ENCODE measurements at regions of chr9 and their contacts with region 1.

Region 1: GRCh38 chr9:83622939-83623678 is at the start of gene IDNK:
- DNase-seq: peak; percentile 82
- ATAC-seq: peak; percentile 89
- H3K4me3 Mint-ChIP-seq: peak within 1 kb of the TSS; percentile 88
- H3K27ac Mint-ChIP-seq: peak within 1 kb of the TSS; percentile 95
- H3K4me1 Mint-ChIP-seq: peaks cover 21% of the 10 kb centered on the region
- H3K27me3 Mint-ChIP-seq: no peaks in the 10 kb centered on the region
- total RNA-seq, gene IDNK: 8.3 to 9.8 TPM

Region 2: DNA sequence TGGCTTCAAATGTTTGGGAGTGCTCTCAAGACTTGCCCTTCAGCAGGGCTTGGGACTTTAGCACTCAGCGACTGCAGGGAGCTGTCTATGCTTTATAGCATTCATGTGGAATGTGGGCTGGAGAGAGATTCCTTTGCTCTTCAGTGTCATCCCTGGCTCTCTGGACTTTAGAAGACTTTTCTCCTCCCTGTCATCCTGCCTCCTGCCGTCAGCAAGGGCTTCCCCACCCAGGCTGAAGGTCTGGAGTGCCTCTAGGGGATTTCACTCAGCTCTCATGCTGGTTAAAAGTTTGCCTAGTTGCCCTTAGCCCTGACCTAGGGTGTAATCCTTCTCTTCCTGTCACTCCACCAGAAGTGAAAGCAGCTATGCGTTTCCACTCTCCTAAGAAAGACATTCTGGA is 295.8 kb before region 1 on chr9:
- POLR2A ChIA-PET with region 1: no interaction called
- DNase-seq: no peak
- ATAC-seq: no peak
- H3K4me3 Mint-ChIP-seq: no peak overlapping the region
- H3K27ac Mint-ChIP-seq: no peak overlapping the region
- H3K4me1 Mint-ChIP-seq: no peaks in the 10 kb centered on the region
- H3K27me3 Mint-ChIP-seq: no peaks in the 10 kb centered on the region

Region 3: GRCh38 chr9:83572524-83572923 is 50.6 kb before region 1 on chr9:
- POLR2A ChIA-PET with region 1: no interaction called
- DNase-seq: no peak
- ATAC-seq: no peak
- H3K4me3 Mint-ChIP-seq: no peak overlapping the region
- H3K27ac Mint-ChIP-seq: no peak overlapping the region
- H3K4me1 Mint-ChIP-seq: peaks cover 8% of the 10 kb centered on the region
- H3K27me3 Mint-ChIP-seq: no peaks in the 10 kb centered on the region

Region 4: GRCh38 chr9:83588256-83588655 is 34.9 kb before region 1 on chr9:
- POLR2A ChIA-PET with region 1: no interaction called
- DNase-seq: no peak
- ATAC-seq: no peak
- H3K4me3 Mint-ChIP-seq: no peak overlapping the region
- H3K27ac Mint-ChIP-seq: no peak overlapping the region
- H3K4me1 Mint-ChIP-seq: no peaks in the 10 kb centered on the region
- H3K27me3 Mint-ChIP-seq: no peaks in the 10 kb centered on the region

Region 5: DNA sequence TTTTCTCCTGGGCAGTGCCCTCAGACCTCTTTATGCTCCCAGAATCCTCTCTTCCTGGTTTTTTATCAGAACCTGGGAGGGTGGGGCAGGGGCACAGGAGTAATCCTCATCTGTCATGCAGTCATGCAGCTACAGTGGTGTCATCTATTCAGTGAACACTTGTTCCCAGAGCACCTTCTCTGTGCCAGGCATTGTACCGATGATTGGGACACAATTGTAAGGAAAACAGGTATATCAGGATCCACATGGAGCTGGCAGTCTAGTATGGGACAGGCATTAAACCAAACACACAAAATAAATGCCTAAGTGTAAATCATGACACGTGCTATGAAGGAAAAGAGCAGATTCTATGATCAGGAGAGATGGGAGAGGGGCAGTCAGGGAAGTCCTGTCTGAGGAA is 21.6 kb before region 1 on chr9:
- POLR2A ChIA-PET with region 1: no interaction called
- DNase-seq: no peak
- ATAC-seq: no peak
- H3K4me3 Mint-ChIP-seq: no peak overlapping the region
- H3K27ac Mint-ChIP-seq: no peak overlapping the region
- H3K4me1 Mint-ChIP-seq: no peaks in the 10 kb centered on the region
- H3K27me3 Mint-ChIP-seq: no peaks in the 10 kb centered on the region

Region 6: DNA sequence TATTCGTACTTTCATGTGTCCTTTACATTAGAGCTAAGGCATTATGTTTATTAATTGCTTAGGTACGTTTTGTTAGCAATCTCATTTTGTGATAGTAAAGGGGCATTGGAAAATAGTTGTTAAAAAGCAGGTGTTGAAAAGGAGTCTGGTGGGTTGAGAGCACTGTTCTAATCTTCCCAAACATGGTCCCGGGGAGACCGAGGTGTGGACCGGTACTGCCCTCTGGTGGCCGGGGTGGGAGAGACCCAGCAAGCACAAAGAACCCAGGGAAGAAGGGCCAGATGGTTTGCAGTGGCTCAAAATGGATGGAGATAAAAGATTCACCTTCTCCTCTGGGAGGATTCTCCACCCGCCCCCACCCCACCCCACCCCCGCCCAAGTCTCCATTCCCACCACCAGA is 26.0 kb after region 1 on chr9:
- POLR2A ChIA-PET with region 1: interaction called, 10 read pairs
- DNase-seq: peak; percentile 81
- ATAC-seq: peak; percentile 84
- H3K4me3 Mint-ChIP-seq: no peak overlapping the region
- H3K27ac Mint-ChIP-seq: no peak overlapping the region
- H3K4me1 Mint-ChIP-seq: peaks cover 7% of the 10 kb centered on the region
- H3K27me3 Mint-ChIP-seq: no peaks in the 10 kb centered on the region

Region 7: GRCh38 chr9:83707768-83708514 is 84.8 kb after region 1 on chr9 and contains the start of gene UBQLN1:
- POLR2A ChIA-PET with region 1: interaction called, 45 read pairs
- DNase-seq: peak; percentile 94
- ATAC-seq: peak; percentile 86
- H3K4me3 Mint-ChIP-seq: peak within 1 kb of the TSS; percentile 90
- H3K27ac Mint-ChIP-seq: peak within 1 kb of the TSS; percentile 100
- H3K4me1 Mint-ChIP-seq: peaks cover 30% of the 10 kb centered on the region
- H3K27me3 Mint-ChIP-seq: no peaks in the 10 kb centered on the region
- total RNA-seq, gene UBQLN1: 87.9 to 108 TPM

Region 8: DNA sequence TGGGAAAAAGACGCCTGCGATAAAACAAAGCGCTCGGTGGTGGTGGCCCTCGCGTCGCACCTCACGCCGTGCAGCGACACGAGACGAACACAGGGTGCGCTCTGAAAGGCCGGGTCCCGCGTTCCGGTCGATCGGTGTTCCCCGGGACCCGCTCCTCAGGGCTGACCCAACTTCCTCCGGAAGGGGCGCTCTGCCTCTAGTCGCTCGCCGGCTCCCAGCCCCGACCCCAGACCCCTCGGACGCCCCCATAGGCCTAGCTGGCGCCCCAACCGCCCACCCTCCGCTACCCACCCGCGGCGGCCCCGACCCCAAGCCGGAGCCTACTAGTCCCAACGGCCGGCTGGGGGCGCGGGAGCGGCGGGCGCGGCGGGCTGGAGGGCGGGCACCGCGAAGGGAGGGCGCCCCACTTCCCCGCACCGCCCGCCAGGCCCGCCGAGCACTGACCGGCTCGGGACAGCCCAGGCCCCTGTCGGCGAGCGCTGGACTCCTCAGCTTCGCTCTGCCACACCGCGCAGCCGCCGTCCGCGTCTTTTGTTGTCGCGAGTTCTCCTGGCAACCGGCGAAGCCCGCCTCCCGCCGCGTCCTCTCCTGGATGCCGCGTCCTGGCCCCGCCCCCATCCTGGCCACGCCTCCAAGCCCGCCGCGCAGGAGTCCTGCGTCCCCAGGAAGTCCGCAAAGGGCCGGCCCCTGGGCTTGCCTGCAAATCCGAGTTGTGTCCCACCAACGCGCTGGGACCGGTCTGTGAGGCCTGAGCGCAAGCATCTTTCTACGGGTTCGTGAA is 298.0 kb after region 1 on chr9 and contains the start of gene KIF27:
- POLR2A ChIA-PET with region 1: interaction called, 14 read pairs
- DNase-seq: peak; percentile 99
- ATAC-seq: peak; percentile 88
- H3K4me3 Mint-ChIP-seq: peak within 1 kb of the TSS; percentile 85
- H3K27ac Mint-ChIP-seq: peak within 1 kb of the TSS; percentile 90
- H3K4me1 Mint-ChIP-seq: peaks cover 9% of the 10 kb centered on the region
- H3K27me3 Mint-ChIP-seq: no peaks in the 10 kb centered on the region
- total RNA-seq, gene KIF27: 3.4 to 3.6 TPM

Measured in activated naive CD8-positive, alpha-beta T cell treated with anti-CD3 and anti-CD28 coated beads, Interleukin-2, amount 10 ng/mL, durations not matched to agents 7 days and 5 days (primary cell).